ENCODE measurements at regions of chr12 and their contacts with region 1.

Region 1: DNA sequence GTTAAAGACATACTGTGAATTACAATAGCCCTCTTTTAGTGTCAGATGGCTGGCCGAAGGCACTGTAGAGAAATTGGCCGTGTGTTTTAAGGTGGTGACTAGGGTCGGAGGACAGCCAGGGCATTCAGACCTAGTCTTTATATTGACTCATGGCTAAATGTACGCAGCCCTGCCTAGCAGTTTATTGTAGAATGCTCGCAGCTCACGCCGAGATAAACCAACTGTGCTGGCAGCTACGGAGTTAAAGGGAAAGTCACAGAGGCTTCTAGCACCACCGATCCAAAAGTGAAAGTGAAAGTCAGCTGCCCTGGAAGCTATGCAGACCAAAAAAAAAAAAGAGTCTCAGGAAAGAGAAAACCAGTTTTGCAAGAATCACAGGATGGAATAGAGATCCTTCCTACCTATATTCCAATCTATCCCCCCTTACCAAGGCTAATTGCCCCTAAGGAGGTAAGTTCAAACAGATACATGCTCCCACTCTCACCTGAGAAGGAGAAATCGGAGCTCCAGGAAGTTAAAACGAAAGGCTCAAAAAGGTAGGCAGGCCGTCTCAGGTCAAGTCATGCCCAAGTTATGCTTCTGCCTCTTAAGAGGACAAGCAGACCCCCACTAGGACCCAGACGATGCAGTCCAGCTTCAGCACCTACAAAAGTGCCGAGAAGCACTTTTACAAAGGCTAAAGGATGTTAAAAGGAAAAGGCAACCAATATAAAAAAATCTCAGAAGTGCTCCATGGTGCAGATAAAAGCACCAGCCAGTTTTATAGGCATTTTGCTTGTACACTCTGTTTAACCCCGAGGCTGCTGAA is 24.8 kb downstream of the KLRK1 start:
- DNase-seq: peak; percentile 79
- ATAC-seq: peak; percentile 32
- H3K4me3 ChIP-seq: peak overlapping the region; percentile 74
- H3K27ac ChIP-seq: peak overlapping the region; percentile 65
- H3K4me1 ChIP-seq: peaks cover 49% of the 10 kb centered on the region
- H3K27me3 ChIP-seq: no peaks in the 10 kb centered on the region
- CTCF ChIP-seq: no peak

Region 2: GRCh38 chr12:10235761-10236631 is 129.0 kb before region 1 on chr12:
- CTCF ChIA-PET with region 1: interaction called, 4 read pairs
- POLR2A ChIA-PET with region 1: no interaction called
- intact Hi-C with region 1: loop called (anchors 2 kb)
- DNase-seq: peak; percentile 55
- ATAC-seq: peak; percentile 73
- H3K4me3 ChIP-seq: no peak overlapping the region
- H3K27ac ChIP-seq: peak overlapping the region; percentile 4; the same call in 1 of the 2 replicates
- H3K4me1 ChIP-seq: peaks cover 12% of the 10 kb centered on the region
- H3K27me3 ChIP-seq: no peaks in the 10 kb centered on the region
- CTCF ChIP-seq: peak; percentile 86

Region 3: GRCh38 chr12:10395390-10395998 is 30.5 kb after region 1 on chr12:
- CTCF ChIA-PET with region 1: interaction called, 5 read pairs
- POLR2A ChIA-PET with region 1: no interaction called
- intact Hi-C with region 1: loop called (anchors 2 kb)
- DNase-seq: peak; percentile 92
- ATAC-seq: peak; percentile 84
- H3K4me3 ChIP-seq: peak overlapping the region; percentile 60; the same call in 1 of the 2 replicates
- H3K27ac ChIP-seq: peak overlapping the region; percentile 80
- H3K4me1 ChIP-seq: peaks cover 56% of the 10 kb centered on the region
- H3K27me3 ChIP-seq: no peaks in the 10 kb centered on the region
- CTCF ChIP-seq: no peak

Region 4: DNA sequence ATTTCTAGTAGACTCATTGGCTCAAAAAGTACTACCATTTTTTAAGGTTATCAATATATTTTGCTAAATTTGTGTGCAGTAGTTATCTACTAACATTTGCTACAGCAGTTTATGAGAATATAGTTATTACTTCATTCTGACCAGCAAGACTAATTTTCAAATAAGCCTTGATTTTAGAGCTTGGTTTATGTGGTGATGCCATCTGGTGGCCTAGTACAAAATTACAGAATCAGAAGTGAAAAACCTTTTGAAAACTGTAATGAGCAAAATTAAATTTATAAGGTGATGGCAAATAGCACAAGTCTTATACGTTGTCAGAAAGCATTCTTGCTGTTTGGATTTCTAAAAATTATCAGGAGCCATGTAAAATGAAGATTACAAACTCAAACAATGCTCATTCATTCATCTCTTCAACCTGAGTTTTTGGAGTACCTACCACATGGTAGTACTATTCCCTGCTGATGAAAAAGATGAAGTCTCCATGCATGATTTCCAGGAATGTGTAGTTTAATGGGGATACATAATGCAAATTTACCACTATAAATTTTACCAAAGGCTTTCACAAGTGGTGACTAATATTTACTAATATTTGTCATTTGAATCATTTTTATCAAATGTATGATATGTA is 197.4 kb after region 1 on chr12:
- CTCF ChIA-PET with region 1: interaction called, 10 read pairs
- POLR2A ChIA-PET with region 1: no interaction called
- intact Hi-C with region 1: loop called (anchors 1 kb)
- DNase-seq: peak; percentile 87
- ATAC-seq: peak; percentile 88
- H3K4me3 ChIP-seq: no peak overlapping the region
- H3K27ac ChIP-seq: peak overlapping the region; percentile 84
- H3K4me1 ChIP-seq: peaks cover 15% of the 10 kb centered on the region
- H3K27me3 ChIP-seq: no peaks in the 10 kb centered on the region
- CTCF ChIP-seq: peak; percentile 77

Region 5: DNA sequence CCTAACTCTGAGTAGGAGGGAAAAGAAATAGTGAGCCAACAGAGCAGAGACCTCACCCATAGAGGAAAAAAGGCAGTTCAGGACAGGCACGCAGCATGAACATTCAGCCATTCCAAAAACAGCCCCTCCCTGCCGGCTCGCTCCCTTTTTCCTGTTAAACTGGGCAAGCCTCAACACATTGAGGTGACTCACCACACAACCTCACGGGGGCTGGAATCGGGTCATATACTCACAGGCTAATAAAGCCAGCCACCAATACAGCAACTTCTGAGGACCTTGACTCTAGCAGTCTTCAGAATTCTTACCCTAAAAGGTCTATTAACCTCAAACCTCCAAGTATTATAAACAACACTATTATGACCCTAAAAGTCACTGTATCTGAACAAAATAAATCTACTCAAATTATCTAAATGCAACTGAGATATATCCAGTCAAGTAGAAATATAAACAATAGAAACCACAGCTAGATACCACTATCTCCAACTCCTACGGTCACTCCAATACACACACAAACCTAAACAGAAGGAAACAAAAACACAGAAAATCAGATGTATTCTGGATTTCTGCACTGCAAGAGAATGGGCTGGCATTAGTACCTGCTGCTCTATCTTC is 351.8 kb after region 1 on chr12:
- CTCF ChIA-PET with region 1: no interaction called
- POLR2A ChIA-PET with region 1: no interaction called
- intact Hi-C with region 1: loop called (anchors 2 kb)
- DNase-seq: peak; percentile 88
- ATAC-seq: peak; percentile 87
- H3K4me3 ChIP-seq: peak overlapping the region; percentile 35
- H3K27ac ChIP-seq: peak overlapping the region; percentile 73
- H3K4me1 ChIP-seq: peaks cover 54% of the 10 kb centered on the region
- H3K27me3 ChIP-seq: no peaks in the 10 kb centered on the region
- CTCF ChIP-seq: no peak

Region 6: GRCh38 chr12:10849425-10849878 is 484.4 kb after region 1 on chr12 and contains the start of gene PRR4:
- CTCF ChIA-PET with region 1: no interaction called
- POLR2A ChIA-PET with region 1: no interaction called
- intact Hi-C with region 1: no loop called
- DNase-seq: peak; percentile 84
- ATAC-seq: peak; percentile 90
- H3K4me3 ChIP-seq: no peak within 1 kb of the TSS
- H3K27ac ChIP-seq: peak within 1 kb of the TSS; percentile 90
- H3K4me1 ChIP-seq: peaks cover 30% of the 10 kb centered on the region
- H3K27me3 ChIP-seq: no peaks in the 10 kb centered on the region
- CTCF ChIP-seq: no peak
- total RNA-seq, gene PRR4: 3.5 and 9.3 TPM in 2 replicates

Measured in PC-3 (cell line).